ENCODE measurements at regions of chr1 and their contacts with region 1.

Region 1: GRCh38 chr1:182291584-182292192 is 99.9 kb downstream of the GLUL start:
- DNase-seq: peak; percentile 87
- ATAC-seq: peak; percentile 70
- H3K4me3 ChIP-seq: peak overlapping the region; percentile 11 to 56 (median 41); a peak in 4 of 6 replicates
- H3K27ac ChIP-seq: peak overlapping the region; percentile 97
- H3K4me1 ChIP-seq: peaks cover 96% of the 10 kb centered on the region
- H3K27me3 ChIP-seq: no peaks in the 10 kb centered on the region
- CTCF ChIP-seq: no peak; the same call in 1 of the 2 replicates
- EP300 ChIP-seq: peak in 1 of 2 experiments; percentile 95; a peak in 2 of 4 replicates
- POLR2A ChIP-seq: no peak
- RAD21 ChIP-seq: no peak

Region 2: DNA sequence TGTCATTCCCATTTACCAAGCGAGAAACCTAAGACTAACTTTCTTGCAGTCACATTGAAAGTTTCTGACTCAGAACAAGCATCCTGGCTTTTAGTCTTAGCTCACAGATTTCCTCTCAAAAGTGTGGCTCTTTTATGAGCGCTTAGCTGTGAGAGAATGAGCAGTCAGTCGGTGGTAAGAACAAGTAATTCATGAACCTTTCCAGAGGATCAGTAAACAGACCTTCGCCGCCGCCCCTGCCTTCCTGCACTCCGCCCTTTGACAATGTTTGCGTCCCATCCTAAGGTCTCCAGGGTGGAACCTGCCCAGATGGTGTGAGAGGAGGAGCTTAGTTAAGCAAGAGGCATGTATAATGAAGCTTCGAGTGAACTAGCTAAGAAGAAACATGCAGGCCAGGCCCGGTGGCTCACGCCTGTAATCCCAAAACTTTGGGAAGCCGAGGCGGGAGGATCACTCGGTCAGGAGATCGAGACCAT is 42.4 kb before region 1 on chr1:
- CTCF ChIA-PET with region 1: no interaction called
- POLR2A ChIA-PET with region 1: interaction called, 19 read pairs
- in situ Hi-C with region 1: no loop called
- intact Hi-C with region 1: loop called (anchors 5 kb)
- DNase-seq: peak; percentile 90
- ATAC-seq: peak; percentile 100
- H3K4me3 ChIP-seq: peak overlapping the region in 2 of 3 experiments; percentile 49 to 61; a peak in 2 of 6 replicates
- H3K27ac ChIP-seq: peak overlapping the region; percentile 80
- H3K4me1 ChIP-seq: peaks cover 28% of the 10 kb centered on the region
- H3K27me3 ChIP-seq: no peaks in the 10 kb centered on the region
- CTCF ChIP-seq: no peak
- EP300 ChIP-seq: peak in 1 of 2 experiments; percentile 44; a peak in 1 of 4 replicates
- POLR2A ChIP-seq: peak in 1 of 2 experiments; percentile 51; a peak in 1 of 4 replicates
- RAD21 ChIP-seq: 0 out of 2 replicates have a peak, but pooled peaks have one; percentile 19

Region 3: DNA sequence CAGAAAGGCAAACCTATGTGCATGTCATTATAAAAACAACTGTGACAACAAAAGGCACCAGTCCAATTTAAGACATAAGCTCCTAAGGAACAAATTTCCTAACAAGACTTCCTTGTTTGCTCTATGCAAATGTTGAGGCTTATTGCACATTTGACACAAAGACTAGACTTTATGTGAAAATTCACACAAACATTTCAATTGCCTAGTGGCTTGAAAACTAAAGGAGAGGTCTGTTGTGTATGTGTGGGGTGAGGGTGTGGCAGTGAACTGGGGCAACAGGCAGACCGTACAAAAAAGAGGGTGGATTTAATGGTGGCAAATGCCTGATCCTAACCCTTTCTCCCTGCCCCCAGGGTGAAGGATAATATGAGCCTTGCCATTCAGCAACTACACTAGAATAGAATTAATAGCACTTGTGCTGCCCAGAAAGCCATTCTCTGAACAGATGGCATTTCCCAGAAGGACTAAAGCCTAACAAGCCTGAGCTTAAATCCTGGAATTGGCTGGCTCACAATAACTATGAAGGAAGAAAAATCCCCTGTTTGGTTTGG is 26.0 kb after region 1 on chr1:
- CTCF ChIA-PET with region 1: no interaction called
- POLR2A ChIA-PET with region 1: interaction called, 11 read pairs
- in situ Hi-C with region 1: no loop called
- intact Hi-C with region 1: no loop called
- DNase-seq: no peak
- ATAC-seq: no peak
- H3K4me3 ChIP-seq: no peak overlapping the region
- H3K27ac ChIP-seq: no peak overlapping the region
- H3K4me1 ChIP-seq: peaks cover 29% of the 10 kb centered on the region
- H3K27me3 ChIP-seq: no peaks in the 10 kb centered on the region
- CTCF ChIP-seq: no peak
- EP300 ChIP-seq: no peak
- POLR2A ChIP-seq: no peak
- RAD21 ChIP-seq: no peak

Region 4: GRCh38 chr1:182391362-182392044 is 99.8 kb after region 1 on chr1 and contains the start of gene GLUL:
- CTCF ChIA-PET with region 1: no interaction called
- POLR2A ChIA-PET with region 1: interaction called, 118 read pairs
- in situ Hi-C with region 1: no loop called
- intact Hi-C with region 1: loop called (anchors 1 kb)
- DNase-seq: peak; percentile 86
- ATAC-seq: peak; percentile 94
- H3K4me3 ChIP-seq: peak within 1 kb of the TSS; percentile 94 to 98 (median 97)
- H3K27ac ChIP-seq: peak within 1 kb of the TSS; percentile 94
- H3K4me1 ChIP-seq: peaks cover 56% of the 10 kb centered on the region
- H3K27me3 ChIP-seq: no peaks in the 10 kb centered on the region; a peak in 1 of 5 replicates
- CTCF ChIP-seq: 0 out of 2 replicates have a peak, but pooled peaks have one; percentile 1
- EP300 ChIP-seq: no peak; a peak in 2 of 4 replicates
- POLR2A ChIP-seq: peak; percentile 99 to 100
- RAD21 ChIP-seq: peak; percentile 66
- total RNA-seq, gene GLUL: 827 and 909 TPM in 2 replicates

Region 5: GRCh38 chr1:182460550-182460951 is 168.9 kb after region 1 on chr1:
- CTCF ChIA-PET with region 1: no interaction called
- POLR2A ChIA-PET with region 1: no interaction called
- in situ Hi-C with region 1: no loop called
- intact Hi-C with region 1: no loop called
- DNase-seq: no peak
- ATAC-seq: no peak
- H3K4me3 ChIP-seq: no peak overlapping the region
- H3K27ac ChIP-seq: no peak overlapping the region
- H3K4me1 ChIP-seq: peaks cover 43% of the 10 kb centered on the region
- H3K27me3 ChIP-seq: no peaks in the 10 kb centered on the region
- CTCF ChIP-seq: no peak
- EP300 ChIP-seq: no peak
- POLR2A ChIP-seq: no peak
- RAD21 ChIP-seq: no peak

Region 6: DNA sequence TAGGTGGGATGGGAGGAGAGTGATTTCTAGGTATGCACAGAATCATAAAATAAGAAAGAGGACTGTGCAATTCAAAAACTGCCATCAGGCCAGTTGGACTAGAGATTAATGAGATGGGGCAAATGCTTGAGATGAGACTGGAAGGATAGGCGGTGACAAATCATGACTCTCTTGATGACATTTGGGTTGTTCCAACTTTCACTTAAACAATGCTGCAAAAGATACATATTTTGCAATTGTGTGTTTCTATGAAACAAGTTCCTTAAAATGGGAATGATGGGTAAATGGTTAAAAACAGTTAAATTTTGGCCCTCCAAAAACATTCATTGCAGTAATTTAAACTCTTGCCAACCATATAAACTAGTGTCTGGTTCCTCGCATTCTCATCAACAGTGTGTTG is 242.2 kb after region 1 on chr1:
- CTCF ChIA-PET with region 1: no interaction called
- POLR2A ChIA-PET with region 1: no interaction called
- in situ Hi-C with region 1: no loop called
- intact Hi-C with region 1: no loop called
- DNase-seq: no peak
- ATAC-seq: no peak
- H3K4me3 ChIP-seq: no peak overlapping the region
- H3K27ac ChIP-seq: no peak overlapping the region
- H3K4me1 ChIP-seq: no peaks in the 10 kb centered on the region
- H3K27me3 ChIP-seq: peaks cover 0 to 5% of the 10 kb centered on the region in 2 experiments; a peak in 1 of 5 replicates
- CTCF ChIP-seq: no peak
- EP300 ChIP-seq: no peak
- POLR2A ChIP-seq: no peak
- RAD21 ChIP-seq: no peak